PC-9 (cell line): ENCODE measurements at regions of chr13 and their contacts with region 1.

Region 1: DNA sequence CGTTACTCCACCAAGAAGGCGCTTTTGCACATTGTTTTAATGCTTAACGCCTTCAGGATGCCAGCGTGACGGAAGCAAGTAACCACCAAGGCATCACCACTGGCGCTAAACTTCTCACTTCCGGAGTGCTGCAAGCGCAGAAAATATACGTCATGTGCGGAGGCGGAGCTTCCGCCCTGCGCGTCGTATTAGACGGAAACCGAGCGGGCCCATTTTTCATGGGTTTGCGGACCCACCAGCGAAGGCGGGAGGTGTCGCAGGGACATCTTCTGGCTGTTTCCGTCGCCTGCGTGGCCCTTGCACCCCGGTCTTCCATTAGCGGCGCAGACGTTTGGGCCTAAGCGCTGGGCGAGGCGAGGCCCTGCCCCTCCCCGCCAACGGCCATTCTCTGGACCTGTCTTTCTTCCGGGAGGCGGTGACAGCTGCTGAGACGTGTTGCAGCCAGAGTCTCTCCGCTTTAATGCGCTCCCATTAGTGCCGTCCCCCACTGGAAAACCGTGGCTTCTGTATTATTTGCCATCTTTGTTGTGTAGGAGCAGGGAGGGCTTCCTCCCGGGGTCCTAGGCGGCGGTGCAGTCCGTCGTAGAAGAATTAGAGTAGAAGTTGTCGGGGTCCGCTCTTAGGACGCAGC is at the start of gene ERCC5:
- DNase-seq: peak; percentile 90 to 92
- H3K4me3 ChIP-seq: peak within 1 kb of the TSS; percentile 90
- H3K27ac ChIP-seq: peak within 1 kb of the TSS; percentile 73
- H3K4me1 ChIP-seq: peaks cover 13% of the 10 kb centered on the region; the same call in 1 of the 2 replicates
- H3K27me3 ChIP-seq: no peaks in the 10 kb centered on the region
- CTCF ChIP-seq: no peak
- total RNA-seq, gene ERCC5: 33.9 and 38.2 TPM in 2 replicates

Region 2: DNA sequence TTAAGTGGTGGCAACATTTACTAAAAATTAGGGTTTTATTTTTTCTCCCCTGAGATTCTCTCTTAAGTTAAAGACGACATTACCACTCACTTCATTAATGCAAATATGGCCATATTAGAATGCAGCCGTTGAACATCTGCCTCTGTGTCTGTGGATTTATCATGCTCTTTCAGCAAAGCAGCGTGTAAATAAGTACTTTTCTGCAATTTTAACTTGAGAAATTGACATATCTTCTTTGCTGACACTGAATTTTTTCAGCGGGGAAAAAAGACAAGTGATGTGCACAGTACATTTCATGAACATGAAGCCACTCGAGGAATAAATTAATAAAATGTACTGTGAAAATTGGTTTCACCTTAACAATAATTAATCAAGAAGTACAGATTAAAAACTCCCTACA is 986.9 kb before region 1 on chr13:
- CTCF ChIA-PET with region 1: no interaction called
- POLR2A ChIA-PET with region 1: no interaction called
- intact Hi-C with region 1: no loop called
- DNase-seq: no peak
- H3K4me3 ChIP-seq: no peak overlapping the region
- H3K27ac ChIP-seq: no peak overlapping the region
- H3K4me1 ChIP-seq: no peaks in the 10 kb centered on the region
- H3K27me3 ChIP-seq: no peaks in the 10 kb centered on the region; the same call in 1 of the 2 replicates
- CTCF ChIP-seq: no peak

Region 3: GRCh38 chr13:101942038-101942437 is 903.7 kb before region 1 on chr13:
- CTCF ChIA-PET with region 1: no interaction called
- POLR2A ChIA-PET with region 1: no interaction called
- intact Hi-C with region 1: loop called (anchors 10 kb)
- DNase-seq: peak in 1 of 2 experiments; percentile 45
- H3K4me3 ChIP-seq: no peak overlapping the region
- H3K27ac ChIP-seq: no peak overlapping the region
- H3K4me1 ChIP-seq: no peaks in the 10 kb centered on the region
- H3K27me3 ChIP-seq: peaks cover 9% of the 10 kb centered on the region; the same call in 1 of the 2 replicates
- CTCF ChIP-seq: peak; percentile 77

Region 4: GRCh38 chr13:102548811-102549210 is 296.9 kb before region 1 on chr13:
- CTCF ChIA-PET with region 1: interaction called, 13 read pairs
- POLR2A ChIA-PET with region 1: no interaction called
- intact Hi-C with region 1: no loop called
- DNase-seq: no peak
- H3K4me3 ChIP-seq: no peak overlapping the region
- H3K27ac ChIP-seq: no peak overlapping the region
- H3K4me1 ChIP-seq: no peaks in the 10 kb centered on the region
- H3K27me3 ChIP-seq: peaks cover 17% of the 10 kb centered on the region; the same call in 1 of the 2 replicates
- CTCF ChIP-seq: no peak

Region 5: GRCh38 chr13:102596147-102597028 is 249.4 kb before region 1 on chr13 and contains the start of gene TPP2:
- CTCF ChIA-PET with region 1: interaction called, 3 read pairs
- POLR2A ChIA-PET with region 1: interaction called, 4 read pairs
- intact Hi-C with region 1: loop called (anchors 1 kb)
- DNase-seq: peak; percentile 96 to 99
- H3K4me3 ChIP-seq: peak within 1 kb of the TSS; percentile 93
- H3K27ac ChIP-seq: peak within 1 kb of the TSS; percentile 95
- H3K4me1 ChIP-seq: peaks cover 35% of the 10 kb centered on the region
- H3K27me3 ChIP-seq: no peaks in the 10 kb centered on the region
- CTCF ChIP-seq: no peak
- total RNA-seq, gene TPP2: 33.3 and 35.1 TPM in 2 replicates

Region 6: GRCh38 chr13:102773441-102774215 is 72.1 kb before region 1 on chr13 and contains the start of gene TEX30:
- CTCF ChIA-PET with region 1: interaction called, 6 read pairs
- POLR2A ChIA-PET with region 1: interaction called, 3 read pairs
- intact Hi-C with region 1: loop called (anchors 2 kb)
- DNase-seq: peak; percentile 64 to 88
- H3K4me3 ChIP-seq: peak within 1 kb of the TSS; percentile 84
- H3K27ac ChIP-seq: 0 out of 2 replicates have a peak within 1 kb of the TSS, but pooled peaks have one; percentile 4
- H3K4me1 ChIP-seq: peaks cover 11% of the 10 kb centered on the region
- H3K27me3 ChIP-seq: no peaks in the 10 kb centered on the region
- CTCF ChIP-seq: no peak
- total RNA-seq, gene TEX30: 9.3 and 13.1 TPM in 2 replicates

Region 7: DNA sequence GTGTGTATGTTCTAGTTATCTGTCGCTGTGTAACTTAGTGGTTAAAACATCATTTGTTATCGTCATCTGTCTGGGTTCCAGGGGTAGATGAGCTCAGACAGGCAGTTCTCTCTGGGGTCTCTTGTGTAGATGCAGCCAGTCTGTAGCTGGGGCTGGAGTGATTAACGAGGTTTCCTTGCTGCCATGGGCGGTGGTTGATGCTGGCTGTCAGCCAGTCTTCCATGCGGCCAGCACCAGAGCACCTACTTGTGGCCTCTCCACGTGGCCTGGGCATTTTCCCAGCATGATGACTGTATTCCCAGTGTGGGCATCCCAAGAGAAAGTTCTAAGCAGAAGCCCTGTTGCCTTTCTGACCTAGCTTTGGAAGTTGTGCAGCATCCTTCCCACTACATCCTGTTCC is 10.8 kb after region 1 on chr13:
- CTCF ChIA-PET with region 1: no interaction called
- POLR2A ChIA-PET with region 1: no interaction called
- intact Hi-C with region 1: no loop called
- DNase-seq: no peak
- H3K4me3 ChIP-seq: no peak overlapping the region
- H3K27ac ChIP-seq: no peak overlapping the region
- H3K4me1 ChIP-seq: no peaks in the 10 kb centered on the region
- H3K27me3 ChIP-seq: no peaks in the 10 kb centered on the region
- CTCF ChIP-seq: no peak